ENCODE measurements at regions of chr7 and their contacts with region 1.

Region 1: DNA sequence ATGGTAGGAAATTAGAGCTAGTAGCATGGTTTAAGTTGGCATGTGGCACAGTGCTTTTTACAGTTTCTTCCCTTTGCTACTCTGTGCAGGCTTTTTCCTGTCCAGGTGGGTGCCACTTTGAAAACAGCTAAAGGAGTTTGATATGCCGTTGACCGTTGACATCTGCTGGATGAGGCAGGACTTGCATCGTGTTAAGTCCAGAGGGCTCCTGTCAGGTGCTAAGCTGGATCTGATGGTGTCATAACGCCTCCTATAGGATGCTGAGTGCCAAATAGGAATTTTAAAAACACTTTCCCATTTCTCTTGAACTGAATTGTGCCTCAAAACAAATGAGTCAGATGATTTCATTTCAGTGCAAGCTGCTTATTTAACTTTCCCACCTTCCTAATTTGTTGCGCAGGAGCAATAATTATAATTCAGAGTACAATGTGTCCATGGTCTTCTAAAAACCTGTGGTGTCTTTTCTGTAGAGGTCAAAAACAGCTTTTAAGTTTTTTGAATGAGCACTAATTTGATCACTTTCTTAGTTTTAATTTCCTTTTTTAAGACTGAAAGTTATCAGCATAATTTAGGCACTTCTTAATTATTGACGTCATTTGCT is 178.3 kb downstream of the CDCA7L start:
- DNase-seq: peak; percentile 83 to 91
- H3K4me3 ChIP-seq: no peak overlapping the region
- H3K4me3 Mint-ChIP-seq: no peak overlapping the region
- H3K27ac Mint-ChIP-seq: no peak overlapping the region
- H3K4me1 ChIP-seq: peaks cover 19% of the 10 kb centered on the region
- H3K4me1 Mint-ChIP-seq: peaks cover 24% of the 10 kb centered on the region
- H3K27me3 ChIP-seq: no peaks in the 10 kb centered on the region
- H3K27me3 Mint-ChIP-seq: no peaks in the 10 kb centered on the region
- CTCF ChIP-seq: peak; percentile 91 to 93

Region 2: GRCh38 chr7:21261627-21262594 is 505.5 kb before region 1 on chr7:
- CTCF ChIA-PET with region 1: interaction called, 30 read pairs
- POLR2A ChIA-PET with region 1: interaction called, 3 read pairs
- intact Hi-C with region 1: loop called (anchors 1 kb)
- DNase-seq: peak; percentile 67 to 71
- H3K4me3 ChIP-seq: no peak overlapping the region
- H3K4me3 Mint-ChIP-seq: no peak overlapping the region
- H3K27ac Mint-ChIP-seq: no peak overlapping the region
- H3K4me1 ChIP-seq: no peaks in the 10 kb centered on the region
- H3K4me1 Mint-ChIP-seq: no peaks in the 10 kb centered on the region
- H3K27me3 ChIP-seq: no peaks in the 10 kb centered on the region
- H3K27me3 Mint-ChIP-seq: no peaks in the 10 kb centered on the region
- CTCF ChIP-seq: peak; percentile 78 to 84

Region 3: DNA sequence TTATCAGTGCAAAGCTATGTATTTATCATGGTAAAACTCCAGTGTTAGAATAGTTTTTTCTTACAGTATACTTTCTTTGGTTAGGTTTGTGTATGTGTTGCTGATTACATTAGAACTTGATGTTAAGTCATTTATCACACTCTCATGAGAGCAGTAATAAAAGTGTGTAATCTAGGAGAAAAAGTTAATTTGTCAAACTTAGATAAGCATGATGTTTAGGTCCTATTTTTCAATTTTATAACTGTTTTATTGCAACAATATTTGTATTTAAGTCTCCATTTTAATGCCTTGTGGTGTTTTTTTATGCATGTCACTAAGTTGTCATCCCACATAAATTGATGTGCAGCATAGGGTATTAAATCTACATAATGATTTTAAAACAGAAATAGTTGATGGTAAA is 253.3 kb before region 1 on chr7:
- CTCF ChIA-PET with region 1: no interaction called
- POLR2A ChIA-PET with region 1: no interaction called
- intact Hi-C with region 1: no loop called
- DNase-seq: no peak
- H3K4me3 ChIP-seq: no peak overlapping the region
- H3K4me3 Mint-ChIP-seq: no peak overlapping the region
- H3K27ac Mint-ChIP-seq: no peak overlapping the region
- H3K4me1 ChIP-seq: 0 out of 2 replicates have a peak, but pooled peaks cover 5% of the 10 kb centered on the region
- H3K4me1 Mint-ChIP-seq: no peaks in the 10 kb centered on the region
- H3K27me3 ChIP-seq: no peaks in the 10 kb centered on the region
- H3K27me3 Mint-ChIP-seq: no peaks in the 10 kb centered on the region
- CTCF ChIP-seq: no peak

Region 4: GRCh38 chr7:21550826-21551544 is 216.4 kb before region 1 on chr7:
- CTCF ChIA-PET with region 1: interaction called, 12 read pairs
- POLR2A ChIA-PET with region 1: no interaction called
- intact Hi-C with region 1: loop called (anchors 5 kb)
- DNase-seq: peak; percentile 69 to 73
- H3K4me3 ChIP-seq: no peak overlapping the region
- H3K4me3 Mint-ChIP-seq: peak overlapping the region; percentile 16
- H3K27ac Mint-ChIP-seq: peak overlapping the region; percentile 61
- H3K4me1 ChIP-seq: peaks cover 22% of the 10 kb centered on the region
- H3K4me1 Mint-ChIP-seq: peaks cover 13% of the 10 kb centered on the region
- H3K27me3 ChIP-seq: no peaks in the 10 kb centered on the region
- H3K27me3 Mint-ChIP-seq: no peaks in the 10 kb centered on the region
- CTCF ChIP-seq: peak; percentile 18 to 23

Region 5: GRCh38 chr7:21617916-21618390 is 149.4 kb before region 1 on chr7:
- CTCF ChIA-PET with region 1: interaction called, 3 read pairs
- POLR2A ChIA-PET with region 1: no interaction called
- intact Hi-C with region 1: loop called (anchors 1 kb)
- DNase-seq: peak; percentile 75 to 83
- H3K4me3 ChIP-seq: no peak overlapping the region
- H3K4me3 Mint-ChIP-seq: peak overlapping the region; percentile 59
- H3K27ac Mint-ChIP-seq: peak overlapping the region; percentile 94
- H3K4me1 ChIP-seq: peaks cover 40% of the 10 kb centered on the region
- H3K4me1 Mint-ChIP-seq: peaks cover 29% of the 10 kb centered on the region
- H3K27me3 ChIP-seq: no peaks in the 10 kb centered on the region
- H3K27me3 Mint-ChIP-seq: no peaks in the 10 kb centered on the region
- CTCF ChIP-seq: no peak